Astrocyte of the cerebellum (primary cell): ENCODE measurements at regions of chr2 and their contacts with region 1.

Region 1: GRCh38 chr2:232511336-232511888 is 8.8 kb upstream of the PRSS56 start:
- DNase-seq: no peak
- H3K4me3 ChIP-seq: no peak overlapping the region
- CTCF ChIP-seq: no peak

Region 2: DNA sequence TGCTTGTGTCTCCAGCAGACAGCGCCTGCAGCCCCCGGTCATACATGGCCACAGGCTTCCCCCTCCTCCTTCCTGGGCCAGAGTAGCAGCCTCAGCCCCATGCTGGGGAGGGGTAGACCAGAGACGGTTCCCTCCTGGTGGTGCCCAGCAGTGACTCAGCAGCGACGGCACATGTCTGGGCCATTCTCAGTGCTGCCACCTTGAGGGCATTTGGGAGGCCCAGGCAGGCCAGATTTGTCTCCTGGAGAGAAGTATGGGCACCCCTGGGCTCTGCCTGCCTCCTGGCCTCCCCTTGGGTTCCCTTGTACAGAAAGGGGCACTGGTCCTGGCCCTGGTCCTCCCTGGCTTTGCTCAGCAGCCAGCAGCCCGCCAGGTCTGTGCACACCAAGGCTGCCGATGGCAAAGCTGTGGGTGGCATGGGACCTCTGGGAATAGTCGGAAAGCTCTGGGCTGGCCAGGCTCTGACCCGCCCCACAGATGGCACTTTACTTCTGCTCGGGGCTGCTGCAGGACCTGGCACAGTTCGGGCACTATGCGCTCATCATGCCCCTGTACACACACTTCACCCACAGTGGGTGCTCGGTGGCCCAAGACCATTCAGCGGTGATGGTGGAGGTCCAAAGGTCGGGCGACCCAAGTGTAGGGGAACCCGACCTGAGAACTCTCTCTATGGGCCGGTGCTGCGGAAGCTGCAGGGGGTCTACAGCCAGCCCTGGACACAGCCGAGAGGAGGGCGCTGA is 66.8 kb before region 1 on chr2:
- in situ Hi-C with region 1: no loop called
- DNase-seq: peak; percentile 5
- H3K4me3 ChIP-seq: no peak overlapping the region
- CTCF ChIP-seq: peak; percentile 62

Region 3: GRCh38 chr2:232463701-232464543 is 47.5 kb before region 1 on chr2:
- in situ Hi-C with region 1: loop called (anchors 5 kb)
- DNase-seq: no peak
- H3K4me3 ChIP-seq: no peak overlapping the region
- CTCF ChIP-seq: no peak

Region 4: DNA sequence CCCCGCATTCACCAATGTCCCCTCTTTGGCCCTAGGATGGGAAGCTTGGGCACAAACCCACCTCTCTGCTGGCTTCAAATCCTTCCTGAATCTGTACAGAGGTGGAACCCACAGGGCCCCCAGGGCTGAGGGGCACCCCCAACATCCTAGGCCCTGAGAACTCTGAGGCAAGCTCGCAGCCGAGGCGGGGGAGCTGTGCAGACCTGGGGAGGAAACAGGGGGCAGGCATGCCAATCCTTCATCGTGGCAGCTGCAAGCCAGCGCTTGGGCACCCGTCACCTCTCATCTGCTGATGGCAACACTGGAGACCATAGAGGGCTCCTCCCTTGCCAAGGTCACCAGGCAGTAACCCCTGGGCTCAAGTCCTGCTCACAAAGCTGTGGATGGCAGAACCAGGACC is 34.6 kb before region 1 on chr2:
- in situ Hi-C with region 1: no loop called
- DNase-seq: no peak
- H3K4me3 ChIP-seq: no peak overlapping the region
- CTCF ChIP-seq: no peak